Ascending aorta (tissue), 2 donors: ENCODE measurements at regions of chr19 and their contacts with region 1.

Region 1: GRCh38 chr19:53467485-53468262 is at the start of gene ZNF813:
- DNase-seq: peak; percentile 76 to 97
- H3K4me3 ChIP-seq: peak within 1 kb of the TSS; percentile 78 to 84
- H3K27ac ChIP-seq: peak within 1 kb of the TSS; percentile 50 to 56
- H3K4me1 ChIP-seq: peaks cover 0 to 11% of the 10 kb centered on the region in 2 donors
- H3K27me3 ChIP-seq: no peaks in the 10 kb centered on the region
- CTCF ChIP-seq: no peak
- total RNA-seq, gene ZNF813: 1.3 TPM

Region 2: GRCh38 chr19:53333463-53334449 is 133.9 kb before region 1 on chr19 and contains the start of gene ZNF845:
- intact Hi-C with region 1: loop called (anchors 5 kb)
- DNase-seq: peak; percentile 75 to 98
- H3K4me3 ChIP-seq: peak within 1 kb of the TSS; percentile 66 to 73
- H3K27ac ChIP-seq: peak within 1 kb of the TSS; percentile 77 to 82
- H3K4me1 ChIP-seq: peaks cover 0 to 4% of the 10 kb centered on the region in 2 donors
- H3K27me3 ChIP-seq: no peaks in the 10 kb centered on the region
- CTCF ChIP-seq: no peak
- total RNA-seq, gene ZNF845: 3.1 TPM

Region 3: DNA sequence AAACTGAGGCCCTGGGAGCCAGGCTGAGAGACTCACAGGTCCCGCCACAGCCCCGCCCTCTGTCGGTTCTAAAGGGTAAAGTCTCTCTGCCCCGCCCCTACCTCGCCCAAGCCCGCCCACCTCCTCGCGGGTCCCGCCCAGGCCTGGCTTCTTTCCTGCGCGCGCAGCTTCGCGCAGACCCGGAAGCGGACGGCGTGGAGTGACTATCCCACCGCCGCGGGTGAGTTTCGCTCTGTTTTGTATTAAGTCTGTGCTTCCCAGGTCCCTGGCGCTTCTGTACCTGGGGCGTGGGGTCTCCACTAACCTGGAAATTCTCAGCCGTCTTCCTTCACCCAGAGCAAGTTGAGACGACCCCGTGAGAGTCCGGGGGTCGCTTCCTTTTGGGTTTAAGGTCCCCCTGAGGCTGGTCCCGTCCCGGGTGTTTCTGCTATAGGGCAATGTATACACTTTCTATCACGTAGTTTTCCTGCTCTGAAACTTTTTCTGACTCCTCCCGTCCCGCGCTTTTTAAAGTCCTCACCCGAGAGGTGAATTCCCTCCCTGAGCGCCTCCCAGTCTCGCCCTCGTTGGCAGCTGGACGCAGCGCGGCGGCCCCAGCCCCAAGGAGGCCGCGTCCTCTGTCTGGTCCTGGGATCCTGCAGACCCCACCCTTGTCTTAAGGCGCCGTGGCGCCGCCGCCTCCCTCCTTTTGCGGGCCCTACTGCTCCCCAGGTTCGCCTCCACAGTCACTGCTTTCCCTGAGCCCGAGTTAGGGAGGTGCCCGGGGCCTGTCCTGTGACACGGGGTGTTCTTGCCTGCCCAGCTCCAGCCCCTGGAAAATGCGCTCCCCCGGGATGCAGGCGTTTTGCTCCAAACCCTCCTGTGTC is 72.5 kb before region 1 on chr19 and contains the start of gene ZNF765:
- intact Hi-C with region 1: loop called (anchors 2 kb)
- DNase-seq: peak; percentile 82 to 97
- H3K4me3 ChIP-seq: peak within 1 kb of the TSS; percentile 65 to 68
- H3K27ac ChIP-seq: peak within 1 kb of the TSS; percentile 80 to 83
- H3K4me1 ChIP-seq: peaks cover 0 to 13% of the 10 kb centered on the region in 2 donors
- H3K27me3 ChIP-seq: no peaks in the 10 kb centered on the region
- CTCF ChIP-seq: peak; percentile 47 to 58 (median 55)
- total RNA-seq, gene ZNF765: 3.5 TPM

Region 4: DNA sequence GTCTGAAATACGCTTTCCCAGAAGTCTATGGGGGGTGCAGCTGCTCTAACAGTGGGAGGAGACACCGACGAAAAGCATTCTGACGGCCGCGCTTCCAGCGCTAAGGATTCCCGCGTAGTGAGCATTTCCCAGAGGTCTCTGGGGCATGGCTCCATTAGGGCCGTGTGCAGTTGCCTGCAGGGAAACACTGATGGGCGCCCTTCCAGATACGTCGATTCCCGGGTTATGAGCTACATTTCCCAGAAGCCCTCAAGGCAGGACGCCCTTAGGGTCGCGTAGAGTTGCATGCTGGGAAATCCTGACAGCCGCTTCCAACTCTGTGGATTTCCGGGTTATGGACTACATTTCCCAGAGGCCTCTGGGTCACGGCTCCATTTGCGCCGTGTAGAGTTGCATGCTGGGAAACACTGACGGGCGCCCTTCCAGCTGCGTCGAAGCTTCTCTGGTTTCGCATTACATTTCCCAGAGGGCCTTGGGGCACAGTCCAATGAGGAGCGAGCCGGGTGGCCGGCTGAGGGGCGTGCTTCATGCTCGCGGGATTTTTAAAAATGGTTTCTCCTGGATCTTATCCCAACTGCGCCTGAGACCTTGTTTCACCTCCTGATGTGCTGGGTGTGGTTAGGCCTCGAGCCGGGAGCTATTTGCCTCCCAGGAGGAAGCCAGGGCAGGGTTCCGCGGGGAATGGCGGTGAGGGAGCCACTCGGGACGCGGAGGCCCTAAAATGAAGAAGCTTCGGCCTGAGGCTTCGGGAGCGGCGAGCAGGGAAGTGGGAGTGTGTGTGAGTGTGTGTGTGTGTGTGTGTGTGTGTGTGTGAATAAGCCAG is 53.1 kb after region 1 on chr19:
- intact Hi-C with region 1: loop called (anchors 1 kb)
- DNase-seq: peak; percentile 90 to 98
- H3K4me3 ChIP-seq: peak overlapping the region; percentile 51 to 66
- H3K27ac ChIP-seq: peak overlapping the region; percentile 62 to 75
- H3K4me1 ChIP-seq: peaks cover 0 to 5% of the 10 kb centered on the region in 2 donors
- H3K27me3 ChIP-seq: no peaks in the 10 kb centered on the region
- CTCF ChIP-seq: no peak